K562 (cell line): ENCODE measurements at regions of chr1 and their contacts with region 1.

Region 1: GRCh38 chr1:212477014-212477679 is 44.4 kb downstream of the NENF start:
- DNase-seq: peak; percentile 88 to 93 (median 91)
- ATAC-seq: peak; percentile 97
- H3K4me3 ChIP-seq: no peak overlapping the region
- H3K27ac ChIP-seq: no peak overlapping the region
- H3K4me1 ChIP-seq: peaks cover 3 to 12% of the 10 kb centered on the region in 2 experiments; a peak in 4 of 5 replicates
- H3K27me3 ChIP-seq: peaks cover 11 to 42% of the 10 kb centered on the region in 2 experiments; a peak in 4 of 5 replicates
- CTCF ChIP-seq: peak; percentile 96 to 98 (median 97)
- EP300 ChIP-seq: no peak; the same call in 1 of the 2 replicates
- POLR2A ChIP-seq: no peak
- RAD21 ChIP-seq: peak; percentile 97 to 98

Region 2: GRCh38 chr1:212401838-212402582 is 75.1 kb before region 1 on chr1:
- CTCF ChIA-PET with region 1: no interaction called
- POLR2A ChIA-PET with region 1: no interaction called
- in situ Hi-C with region 1: no loop called
- intact Hi-C with region 1: no loop called
- DNase-seq: no peak
- ATAC-seq: no peak
- H3K4me3 ChIP-seq: no peak overlapping the region
- H3K27ac ChIP-seq: no peak overlapping the region
- H3K4me1 ChIP-seq: no peaks in the 10 kb centered on the region
- H3K27me3 ChIP-seq: no peaks in the 10 kb centered on the region
- CTCF ChIP-seq: no peak
- EP300 ChIP-seq: no peak
- POLR2A ChIP-seq: no peak
- RAD21 ChIP-seq: no peak

Region 3: DNA sequence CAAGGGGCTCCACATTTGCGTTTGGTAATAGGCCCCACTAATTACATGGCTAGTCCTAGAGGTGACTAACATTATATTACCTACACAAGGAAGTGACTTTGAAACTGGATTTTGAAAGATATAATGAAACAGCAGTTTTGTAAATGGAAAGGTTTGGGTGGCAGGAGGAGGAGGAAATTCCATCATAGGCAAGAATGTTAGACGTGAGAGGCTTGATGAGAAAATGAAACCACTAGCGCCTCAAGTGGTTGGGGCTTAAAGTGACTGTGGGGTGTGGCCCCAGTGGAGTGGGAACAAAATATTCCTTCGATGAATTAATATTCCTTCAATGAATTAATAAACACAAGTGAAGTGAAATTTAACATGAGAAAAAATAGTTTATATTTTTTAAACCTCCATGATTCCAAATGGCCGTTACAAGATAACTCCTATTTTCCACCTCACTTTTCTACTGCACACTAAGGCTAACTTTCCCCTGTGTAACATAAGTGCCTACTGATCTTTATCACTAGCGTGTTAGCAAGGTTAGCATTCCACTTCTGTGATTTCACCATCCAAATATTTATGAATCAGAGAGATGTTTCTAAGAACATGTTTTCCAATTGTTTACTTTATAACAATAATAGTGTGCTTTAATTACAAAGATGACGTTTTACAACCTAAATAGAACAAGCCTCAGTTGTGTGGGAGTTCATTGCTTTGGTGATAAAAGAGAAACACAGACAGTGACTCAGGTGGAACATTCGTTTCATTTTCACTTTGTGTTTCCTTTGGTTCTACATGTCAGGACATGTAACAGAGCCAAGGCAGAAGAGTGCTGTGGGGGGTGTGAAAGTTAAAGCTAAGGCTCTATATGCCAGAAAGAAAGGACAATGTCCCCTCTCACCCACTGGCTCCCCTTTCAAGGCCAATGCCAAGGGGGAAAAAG is 118.9 kb after region 1 on chr1:
- CTCF ChIA-PET with region 1: no interaction called
- POLR2A ChIA-PET with region 1: interaction called, 3 read pairs
- in situ Hi-C with region 1: loop called (anchors 5 kb)
- intact Hi-C with region 1: loop called (anchors 2 kb)
- DNase-seq: peak; percentile 67 to 73 (median 70)
- ATAC-seq: peak; percentile 94
- H3K4me3 ChIP-seq: no peak overlapping the region
- H3K27ac ChIP-seq: no peak overlapping the region
- H3K4me1 ChIP-seq: peaks cover 0 to 9% of the 10 kb centered on the region in 2 experiments; a peak in 3 of 5 replicates
- H3K27me3 ChIP-seq: peaks cover 20 to 26% of the 10 kb centered on the region in 2 experiments
- CTCF ChIP-seq: peak; percentile 73 to 81 (median 79)
- EP300 ChIP-seq: 0 out of 2 replicates have a peak, but pooled peaks have one; percentile 5
- POLR2A ChIP-seq: no peak
- RAD21 ChIP-seq: peak; percentile 53 to 64

Region 4: GRCh38 chr1:212665241-212666115 is 188.3 kb after region 1 on chr1:
- CTCF ChIA-PET with region 1: interaction called, 4 read pairs
- POLR2A ChIA-PET with region 1: interaction called, 3 read pairs
- in situ Hi-C with region 1: no loop called
- intact Hi-C with region 1: loop called (anchors 1 kb)
- DNase-seq: peak; percentile 85 to 88 (median 86)
- ATAC-seq: peak; percentile 99
- H3K4me3 ChIP-seq: peak overlapping the region; percentile 40
- H3K27ac ChIP-seq: no peak overlapping the region
- H3K4me1 ChIP-seq: peaks cover 3 to 11% of the 10 kb centered on the region in 2 experiments; a peak in 4 of 5 replicates
- H3K27me3 ChIP-seq: peaks cover 13 to 35% of the 10 kb centered on the region in 2 experiments; a peak in 4 of 5 replicates
- CTCF ChIP-seq: peak; percentile 94 to 95 (median 95)
- EP300 ChIP-seq: no peak
- POLR2A ChIP-seq: no peak
- RAD21 ChIP-seq: peak; percentile 97 to 98

Region 5: GRCh38 chr1:212782422-212783154 is 305.4 kb after region 1 on chr1:
- CTCF ChIA-PET with region 1: interaction called, 3 read pairs
- POLR2A ChIA-PET with region 1: no interaction called
- in situ Hi-C with region 1: no loop called
- intact Hi-C with region 1: loop called (anchors 2 kb)
- DNase-seq: peak in 1 of 4 experiments; percentile 23
- ATAC-seq: peak; percentile 84
- H3K4me3 ChIP-seq: no peak overlapping the region
- H3K27ac ChIP-seq: no peak overlapping the region
- H3K4me1 ChIP-seq: no peaks in the 10 kb centered on the region
- H3K27me3 ChIP-seq: no peaks in the 10 kb centered on the region
- CTCF ChIP-seq: peak in 2 of 3 experiments; percentile 50 to 81; a peak in 4 of 6 replicates
- EP300 ChIP-seq: no peak
- POLR2A ChIP-seq: no peak
- RAD21 ChIP-seq: peak; percentile 81 to 82